H1 (cell line): ENCODE measurements at regions of chr9 and their contacts with region 1.

Region 1: GRCh38 chr9:89428901-89429890 is 68.7 kb downstream of the SEMA4D start:
- DNase-seq: peak; percentile 53 to 74
- H3K4me3 ChIP-seq: no peak overlapping the region
- H3K27ac ChIP-seq: peak overlapping the region; percentile 14; the same call in 1 of the 2 replicates
- H3K4me1 ChIP-seq: peaks cover 9 to 30% (median 19%) of the 10 kb centered on the region in 4 experiments
- H3K27me3 ChIP-seq: no peaks in the 10 kb centered on the region
- CTCF ChIP-seq: peak in 2 of 3 experiments; percentile 91; a peak in 3 of 4 replicates
- EP300 ChIP-seq: no peak
- POLR2A ChIP-seq: no peak
- RAD21 ChIP-seq: peak; percentile 80 to 90

Region 2: GRCh38 chr9:89358985-89359384 is 70.2 kb before region 1 on chr9:
- CTCF ChIA-PET with region 1: no interaction called
- POLR2A ChIA-PET with region 1: no interaction called
- DNase-seq: no peak
- H3K4me3 ChIP-seq: no peak overlapping the region
- H3K27ac ChIP-seq: no peak overlapping the region
- H3K4me1 ChIP-seq: no peaks in the 10 kb centered on the region
- H3K27me3 ChIP-seq: no peaks in the 10 kb centered on the region
- CTCF ChIP-seq: no peak
- EP300 ChIP-seq: no peak
- POLR2A ChIP-seq: no peak
- RAD21 ChIP-seq: no peak

Region 3: DNA sequence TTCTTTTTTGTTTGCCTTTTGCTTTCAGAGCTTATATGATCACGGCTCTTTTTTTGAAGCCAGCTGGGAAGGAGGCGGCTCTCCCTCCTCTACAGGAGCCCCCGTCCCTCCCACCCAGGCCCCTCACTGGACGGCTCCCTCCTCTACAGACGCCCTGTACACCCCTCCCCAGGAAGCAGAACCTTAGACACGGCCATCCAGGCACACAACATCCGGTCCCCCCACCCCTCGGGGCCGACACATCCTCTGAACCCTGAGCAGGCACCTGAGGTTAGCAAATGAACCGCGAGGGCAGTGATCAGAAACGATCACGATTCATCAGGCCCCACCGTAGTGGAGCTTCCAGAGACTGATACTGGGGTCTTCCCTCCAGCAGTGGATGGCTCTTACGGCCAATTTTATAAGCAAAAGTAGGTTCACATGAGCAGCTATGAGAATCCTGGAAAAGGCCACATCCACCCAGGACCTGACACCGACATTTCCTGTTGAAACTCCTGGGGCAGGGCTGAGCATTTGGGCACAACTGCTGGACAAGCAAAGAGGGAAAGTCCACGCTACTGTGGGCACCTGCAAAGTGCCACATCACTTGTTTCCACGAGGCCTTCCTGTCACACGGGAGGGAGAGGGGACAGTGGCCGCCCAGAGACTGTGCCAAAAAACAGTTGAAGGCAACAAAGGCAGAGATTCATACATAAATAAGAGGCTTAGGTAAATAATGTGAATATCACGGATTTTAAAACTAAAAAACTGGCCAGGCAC is 10.1 kb before region 1 on chr9:
- CTCF ChIA-PET with region 1: interaction called, 19 read pairs
- POLR2A ChIA-PET with region 1: interaction called, 3 read pairs
- DNase-seq: no peak
- H3K4me3 ChIP-seq: no peak overlapping the region
- H3K27ac ChIP-seq: no peak overlapping the region
- H3K4me1 ChIP-seq: peaks cover 0 to 5% (median 0%) of the 10 kb centered on the region in 4 experiments; a peak in 1 of 7 replicates
- H3K27me3 ChIP-seq: no peaks in the 10 kb centered on the region; a peak in 1 of 7 replicates
- CTCF ChIP-seq: no peak
- EP300 ChIP-seq: no peak
- POLR2A ChIP-seq: no peak
- RAD21 ChIP-seq: no peak

Region 4: DNA sequence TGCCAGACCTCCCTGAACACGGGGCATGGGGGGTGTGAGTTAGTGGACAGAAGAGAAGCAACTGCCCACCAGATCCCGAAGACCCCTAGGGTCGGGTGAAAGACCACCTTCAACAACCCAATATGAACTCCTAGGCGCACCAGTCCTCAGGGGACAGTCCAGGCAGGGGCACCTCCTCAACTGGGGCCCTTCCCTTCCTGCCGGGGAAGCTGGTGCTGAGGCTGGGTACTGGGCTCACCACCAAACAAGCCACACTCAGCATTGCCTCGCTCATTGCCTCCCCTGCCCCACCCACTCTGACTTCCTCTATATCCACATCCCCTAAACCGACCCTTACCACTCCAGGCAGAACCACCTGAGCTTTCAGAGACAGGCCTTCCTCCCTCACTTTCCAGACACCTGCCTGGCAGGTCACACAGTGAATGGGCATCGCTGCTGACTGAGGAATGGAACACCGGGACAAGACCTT is 26.2 kb after region 1 on chr9:
- CTCF ChIA-PET with region 1: interaction called, 28 read pairs
- POLR2A ChIA-PET with region 1: interaction called, 10 read pairs
- DNase-seq: no peak
- H3K4me3 ChIP-seq: no peak overlapping the region
- H3K27ac ChIP-seq: 0 out of 2 replicates have a peak overlapping the region, but pooled peaks have one; percentile 45
- H3K4me1 ChIP-seq: peaks cover 10 to 19% (median 12%) of the 10 kb centered on the region in 4 experiments
- H3K27me3 ChIP-seq: no peaks in the 10 kb centered on the region
- CTCF ChIP-seq: no peak
- EP300 ChIP-seq: no peak
- POLR2A ChIP-seq: no peak
- RAD21 ChIP-seq: no peak

Region 5: GRCh38 chr9:89536145-89536574 is 107.0 kb after region 1 on chr9:
- CTCF ChIA-PET with region 1: interaction called, 18 read pairs
- POLR2A ChIA-PET with region 1: no interaction called
- DNase-seq: no peak
- H3K4me3 ChIP-seq: no peak overlapping the region
- H3K27ac ChIP-seq: no peak overlapping the region
- H3K4me1 ChIP-seq: no peaks in the 10 kb centered on the region; a peak in 1 of 7 replicates
- H3K27me3 ChIP-seq: no peaks in the 10 kb centered on the region
- CTCF ChIP-seq: no peak
- EP300 ChIP-seq: no peak
- POLR2A ChIP-seq: no peak
- RAD21 ChIP-seq: no peak

Region 6: GRCh38 chr9:89555451-89556375 is 126.5 kb after region 1 on chr9:
- CTCF ChIA-PET with region 1: interaction called, 147 read pairs
- POLR2A ChIA-PET with region 1: no interaction called
- DNase-seq: no peak
- H3K4me3 ChIP-seq: no peak overlapping the region
- H3K27ac ChIP-seq: no peak overlapping the region
- H3K4me1 ChIP-seq: peaks cover 0 to 7% (median 5%) of the 10 kb centered on the region in 4 experiments; a peak in 4 of 7 replicates
- H3K27me3 ChIP-seq: no peaks in the 10 kb centered on the region
- CTCF ChIP-seq: no peak
- EP300 ChIP-seq: no peak
- POLR2A ChIP-seq: no peak
- RAD21 ChIP-seq: no peak

Region 7: DNA sequence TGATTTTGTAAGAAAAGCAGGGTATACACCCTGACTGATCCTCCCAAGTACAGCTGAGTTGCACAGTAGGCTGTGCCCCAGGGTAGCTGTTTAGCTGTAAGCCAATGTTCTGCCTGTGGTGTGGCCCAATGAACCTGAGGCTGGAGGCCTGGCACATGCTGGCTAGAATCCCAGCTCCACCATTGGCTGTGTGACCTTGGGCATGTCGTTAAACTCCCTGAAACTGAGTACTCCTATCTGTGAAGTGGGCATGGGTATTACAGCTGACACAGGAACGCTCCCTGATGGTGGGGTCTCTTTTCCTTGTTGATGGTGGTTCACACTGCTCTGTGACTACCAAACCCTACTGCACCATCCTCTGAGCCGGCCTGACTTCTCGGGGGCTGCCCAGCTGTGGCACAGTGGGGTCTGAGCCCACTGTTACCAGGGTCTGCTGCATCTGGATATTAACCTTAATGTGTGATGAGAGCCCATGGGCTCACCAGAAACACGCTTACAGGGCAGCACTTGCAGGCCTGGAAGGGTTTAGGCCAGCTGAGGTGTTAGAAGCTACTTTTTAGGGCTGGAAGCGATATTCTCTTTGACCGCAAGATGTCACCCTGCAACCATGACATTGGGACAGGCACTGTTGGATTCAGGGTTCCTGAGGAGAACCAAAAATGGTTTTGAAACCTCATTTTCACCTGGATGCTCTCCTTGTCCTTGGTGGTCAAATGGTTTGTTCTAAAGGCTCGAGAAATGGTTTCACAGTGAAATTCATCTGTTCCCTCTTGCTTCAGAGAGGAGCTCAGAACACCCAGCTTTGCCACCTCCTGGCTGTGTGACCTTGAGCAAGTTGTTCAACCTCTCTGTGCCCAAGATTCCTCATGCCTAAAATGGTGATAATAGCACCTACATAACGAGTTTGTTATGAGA is 168.8 kb after region 1 on chr9:
- CTCF ChIA-PET with region 1: interaction called, 35 read pairs
- POLR2A ChIA-PET with region 1: interaction called, 3 read pairs
- DNase-seq: peak in 1 of 2 experiments; percentile 82
- H3K4me3 ChIP-seq: no peak overlapping the region
- H3K27ac ChIP-seq: no peak overlapping the region
- H3K4me1 ChIP-seq: peaks cover 4 to 10% (median 6%) of the 10 kb centered on the region in 4 experiments
- H3K27me3 ChIP-seq: no peaks in the 10 kb centered on the region
- CTCF ChIP-seq: peak; percentile 68 to 92 (median 92)
- EP300 ChIP-seq: no peak
- POLR2A ChIP-seq: no peak
- RAD21 ChIP-seq: peak; percentile 99 to 100

Region 8: DNA sequence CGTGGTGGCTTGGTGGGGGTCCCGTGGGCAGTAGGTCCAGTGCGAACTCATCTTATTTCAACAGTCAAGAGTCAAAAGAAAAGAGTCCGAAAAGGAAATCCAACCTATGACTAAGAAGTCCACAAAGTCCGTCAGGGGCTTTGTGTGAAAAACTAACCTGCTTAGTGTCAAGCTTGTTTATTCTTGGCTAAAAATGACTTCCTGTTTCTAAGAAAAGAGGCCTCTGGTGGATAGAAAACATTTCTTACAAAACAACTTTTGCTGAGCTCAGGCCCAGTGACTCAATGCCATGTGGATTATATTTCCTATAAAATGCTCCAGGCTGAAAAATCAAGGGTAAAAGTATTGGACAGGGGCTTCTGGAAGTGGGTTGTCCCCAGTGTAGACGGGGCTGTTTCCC is 281.5 kb after region 1 on chr9:
- CTCF ChIA-PET with region 1: no interaction called
- POLR2A ChIA-PET with region 1: no interaction called
- DNase-seq: no peak
- H3K4me3 ChIP-seq: no peak overlapping the region
- H3K27ac ChIP-seq: no peak overlapping the region
- H3K4me1 ChIP-seq: peaks cover 0 to 4% (median 0%) of the 10 kb centered on the region in 4 experiments; a peak in 1 of 7 replicates
- H3K27me3 ChIP-seq: no peaks in the 10 kb centered on the region
- CTCF ChIP-seq: no peak
- EP300 ChIP-seq: no peak
- POLR2A ChIP-seq: no peak
- RAD21 ChIP-seq: no peak